Caco-2 (cell line): ENCODE measurements at regions of chr1 and their contacts with region 1.

Region 1: GRCh38 chr1:78145105-78145580 is 99.4 kb downstream of the GIPC2 start:
- DNase-seq: peak; percentile 35 to 57
- H3K4me3 ChIP-seq: no peak overlapping the region
- H3K4me3 Mint-ChIP-seq: no peak overlapping the region
- H3K27ac Mint-ChIP-seq: no peak overlapping the region
- H3K4me1 ChIP-seq: no peaks in the 10 kb centered on the region
- H3K4me1 Mint-ChIP-seq: no peaks in the 10 kb centered on the region
- H3K27me3 ChIP-seq: no peaks in the 10 kb centered on the region
- H3K27me3 Mint-ChIP-seq: no peaks in the 10 kb centered on the region
- CTCF ChIP-seq: peak; percentile 64 to 69

Region 2: GRCh38 chr1:78156805-78157521 is 11.8 kb after region 1 on chr1:
- CTCF ChIA-PET with region 1: no interaction called
- POLR2A ChIA-PET with region 1: no interaction called
- intact Hi-C with region 1: no loop called
- DNase-seq: no peak
- H3K4me3 ChIP-seq: no peak overlapping the region
- H3K4me3 Mint-ChIP-seq: no peak overlapping the region
- H3K27ac Mint-ChIP-seq: no peak overlapping the region
- H3K4me1 ChIP-seq: no peaks in the 10 kb centered on the region
- H3K4me1 Mint-ChIP-seq: no peaks in the 10 kb centered on the region
- H3K27me3 ChIP-seq: no peaks in the 10 kb centered on the region
- H3K27me3 Mint-ChIP-seq: no peaks in the 10 kb centered on the region
- CTCF ChIP-seq: no peak

Region 3: DNA sequence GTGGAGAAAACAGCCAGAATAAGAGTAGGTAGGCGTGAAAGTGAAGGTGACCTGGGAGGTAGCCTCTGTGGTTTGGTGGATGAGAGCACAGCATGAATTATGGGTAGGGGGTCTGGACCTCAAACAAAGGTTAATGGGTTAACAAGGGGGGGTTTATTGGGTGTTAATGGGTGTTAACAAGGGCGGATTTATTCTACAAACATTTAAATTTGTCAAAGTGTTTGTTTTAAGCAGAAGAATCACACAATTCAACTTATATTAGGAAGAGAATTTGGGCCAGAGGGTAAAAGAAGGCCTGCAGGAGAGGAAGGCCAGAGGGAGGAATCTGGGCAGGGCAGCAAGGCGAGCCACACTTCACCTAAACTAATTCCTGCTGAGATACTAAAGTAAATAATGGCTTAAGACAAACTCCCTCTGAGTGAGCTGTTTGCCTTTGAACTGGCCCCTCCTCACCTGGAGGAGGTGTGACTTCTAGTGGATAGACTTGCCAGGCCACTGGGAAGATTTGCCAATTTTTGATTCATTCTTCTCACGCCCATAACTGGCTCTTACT is 92.3 kb after region 1 on chr1:
- CTCF ChIA-PET with region 1: no interaction called
- POLR2A ChIA-PET with region 1: no interaction called
- intact Hi-C with region 1: loop called (anchors 1 kb)
- DNase-seq: peak; percentile 63 to 69
- H3K4me3 ChIP-seq: no peak overlapping the region
- H3K4me3 Mint-ChIP-seq: no peak overlapping the region
- H3K27ac Mint-ChIP-seq: peak overlapping the region; percentile 46
- H3K4me1 ChIP-seq: peaks cover 8% of the 10 kb centered on the region
- H3K4me1 Mint-ChIP-seq: peaks cover 18% of the 10 kb centered on the region
- H3K27me3 ChIP-seq: no peaks in the 10 kb centered on the region
- H3K27me3 Mint-ChIP-seq: no peaks in the 10 kb centered on the region
- CTCF ChIP-seq: no peak

Region 4: DNA sequence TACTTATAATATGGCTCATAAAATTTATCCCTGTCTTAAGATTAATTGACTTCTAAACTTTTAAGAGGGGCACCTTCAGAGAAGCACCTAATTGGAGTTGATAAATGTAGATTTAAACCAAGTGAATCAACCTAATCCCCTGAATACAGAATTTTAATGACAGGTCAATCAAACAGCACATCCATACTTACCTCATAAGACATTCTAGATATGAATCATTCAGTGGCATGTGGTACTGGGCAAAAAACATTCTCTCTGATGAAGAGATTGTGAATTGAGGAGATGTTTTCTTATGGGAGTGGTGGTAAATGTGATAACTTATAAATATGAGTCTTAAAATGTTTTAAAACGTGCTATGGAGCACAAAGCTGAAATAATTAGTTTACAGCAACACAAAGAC is 178.2 kb after region 1 on chr1:
- CTCF ChIA-PET with region 1: no interaction called
- POLR2A ChIA-PET with region 1: no interaction called
- intact Hi-C with region 1: loop called (anchors 10 kb)
- DNase-seq: no peak
- H3K4me3 ChIP-seq: no peak overlapping the region
- H3K4me3 Mint-ChIP-seq: no peak overlapping the region
- H3K27ac Mint-ChIP-seq: no peak overlapping the region
- H3K4me1 ChIP-seq: no peaks in the 10 kb centered on the region
- H3K4me1 Mint-ChIP-seq: no peaks in the 10 kb centered on the region
- H3K27me3 ChIP-seq: no peaks in the 10 kb centered on the region
- H3K27me3 Mint-ChIP-seq: no peaks in the 10 kb centered on the region
- CTCF ChIP-seq: no peak

Region 5: GRCh38 chr1:78607334-78607927 is 462.3 kb after region 1 on chr1:
- CTCF ChIA-PET with region 1: no interaction called
- POLR2A ChIA-PET with region 1: no interaction called
- intact Hi-C with region 1: loop called (anchors 1 kb)
- DNase-seq: no peak
- H3K4me3 ChIP-seq: no peak overlapping the region
- H3K4me3 Mint-ChIP-seq: peak overlapping the region; percentile 29
- H3K27ac Mint-ChIP-seq: no peak overlapping the region
- H3K4me1 ChIP-seq: no peaks in the 10 kb centered on the region
- H3K4me1 Mint-ChIP-seq: no peaks in the 10 kb centered on the region
- H3K27me3 ChIP-seq: no peaks in the 10 kb centered on the region
- H3K27me3 Mint-ChIP-seq: peaks cover 9% of the 10 kb centered on the region
- CTCF ChIP-seq: peak; percentile 11 to 23

Region 6: GRCh38 chr1:78676347-78676982 is 531.3 kb after region 1 on chr1:
- CTCF ChIA-PET with region 1: no interaction called
- POLR2A ChIA-PET with region 1: no interaction called
- intact Hi-C with region 1: loop called (anchors 5 kb)
- DNase-seq: peak in 1 of 2 experiments; percentile 33
- H3K4me3 ChIP-seq: no peak overlapping the region
- H3K4me3 Mint-ChIP-seq: no peak overlapping the region
- H3K27ac Mint-ChIP-seq: no peak overlapping the region
- H3K4me1 ChIP-seq: no peaks in the 10 kb centered on the region
- H3K4me1 Mint-ChIP-seq: no peaks in the 10 kb centered on the region
- H3K27me3 ChIP-seq: no peaks in the 10 kb centered on the region
- H3K27me3 Mint-ChIP-seq: no peaks in the 10 kb centered on the region
- CTCF ChIP-seq: peak; percentile 43 to 59